Breast epithelium (tissue), 4 donors: ENCODE measurements at regions of chr3 and their contacts with region 1.

Region 1: DNA sequence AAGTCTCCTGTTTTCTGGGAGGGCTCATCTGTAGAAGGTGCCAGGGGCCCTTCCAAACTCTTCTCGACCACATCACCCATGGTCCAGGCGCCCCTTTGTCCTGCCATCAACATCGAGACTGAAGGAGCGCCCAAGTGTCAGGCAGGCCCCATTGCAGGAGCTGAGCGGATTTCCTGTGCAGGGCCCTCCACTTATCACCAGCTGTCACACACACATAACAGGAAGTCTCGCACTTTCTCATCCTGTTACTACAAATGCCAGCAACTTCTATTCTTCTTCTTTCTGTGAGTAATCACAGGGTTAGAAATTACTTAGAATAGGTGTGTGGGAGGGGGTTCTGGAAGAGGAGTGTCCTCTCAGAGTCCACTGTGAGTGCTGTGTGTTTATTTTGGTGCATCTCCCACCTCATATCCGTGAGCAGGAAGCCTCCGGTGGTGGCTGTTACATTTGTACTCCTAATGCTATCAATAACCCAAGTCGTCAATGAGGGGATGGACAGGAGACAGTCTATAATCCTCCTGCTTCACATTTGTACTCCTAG is at the start of gene KLHL6:
- DNase-seq: no peak
- H3K4me3 ChIP-seq: peak within 1 kb of the TSS; percentile 15 to 35 (median 20)
- H3K27ac ChIP-seq: peak within 1 kb of the TSS in 1 of 2 donors; percentile 58
- H3K4me1 ChIP-seq: no peaks in the 10 kb centered on the region
- H3K27me3 ChIP-seq: no peaks in the 10 kb centered on the region
- CTCF ChIP-seq: no peak
- POLR2A ChIP-seq: no peak
- total RNA-seq, gene KLHL6: 2.7 to 7.9 (median 4.3) TPM

Region 2: DNA sequence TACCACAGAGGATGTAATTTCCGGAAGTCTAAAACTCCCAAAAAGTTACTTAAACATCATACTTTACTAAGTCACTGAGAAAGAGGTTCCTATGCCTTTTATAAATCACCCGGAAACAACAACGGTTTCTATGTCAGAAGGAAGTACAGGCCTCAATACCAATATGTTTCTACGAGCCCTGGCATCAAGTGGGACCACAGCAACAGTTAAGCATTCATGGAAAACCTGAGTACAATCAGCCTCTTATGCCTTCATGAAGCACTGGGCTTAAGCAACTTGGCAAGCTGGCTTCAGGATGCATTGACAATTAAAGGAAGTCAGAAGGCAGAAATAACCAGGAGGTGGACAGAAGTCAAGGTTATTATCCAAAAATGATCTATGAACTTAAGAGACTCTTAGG is 321.6 kb before region 1 on chr3:
- intact Hi-C with region 1: no loop called
- DNase-seq: peak in 1 of 2 donors; percentile 41
- H3K4me3 ChIP-seq: no peak overlapping the region
- H3K27ac ChIP-seq: peak overlapping the region in 1 of 2 donors; percentile 54
- H3K4me1 ChIP-seq: no peaks in the 10 kb centered on the region
- H3K27me3 ChIP-seq: no peaks in the 10 kb centered on the region
- CTCF ChIP-seq: no peak
- POLR2A ChIP-seq: no peak

Region 3: DNA sequence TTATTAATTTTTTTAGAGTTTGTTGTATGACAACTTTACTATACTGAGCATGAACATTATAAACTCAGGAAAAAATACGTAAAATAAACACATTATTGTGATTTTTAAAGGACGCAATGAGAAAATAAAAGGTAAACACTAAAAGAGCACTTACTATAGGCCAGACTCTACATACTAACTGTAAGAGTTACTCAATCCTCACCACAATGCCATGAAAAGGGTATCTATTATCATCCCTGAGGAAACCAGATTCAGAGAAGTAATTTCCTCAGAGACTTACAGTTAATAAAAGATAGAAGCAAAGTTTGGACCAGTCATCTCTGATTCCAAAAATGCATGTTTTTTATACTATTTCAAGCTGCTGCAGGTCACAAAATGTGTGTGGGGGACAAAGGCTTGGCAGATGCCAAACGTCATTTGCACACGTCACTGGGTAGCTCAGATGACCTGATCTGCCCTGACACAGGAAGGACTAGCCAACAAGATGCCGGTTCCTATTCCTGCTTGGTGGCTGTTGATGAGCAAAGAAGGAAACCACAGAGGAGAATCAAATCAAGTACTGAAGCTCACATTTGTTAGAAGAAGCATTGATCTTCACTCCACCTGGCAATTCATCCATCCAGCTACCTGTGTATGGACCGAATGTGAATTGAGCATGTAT is 42.4 kb before region 1 on chr3:
- intact Hi-C with region 1: loop called (anchors 5 kb)
- DNase-seq: no peak
- H3K4me3 ChIP-seq: no peak overlapping the region
- H3K27ac ChIP-seq: no peak overlapping the region
- H3K4me1 ChIP-seq: no peaks in the 10 kb centered on the region
- H3K27me3 ChIP-seq: no peaks in the 10 kb centered on the region
- CTCF ChIP-seq: no peak
- POLR2A ChIP-seq: no peak

Region 4: DNA sequence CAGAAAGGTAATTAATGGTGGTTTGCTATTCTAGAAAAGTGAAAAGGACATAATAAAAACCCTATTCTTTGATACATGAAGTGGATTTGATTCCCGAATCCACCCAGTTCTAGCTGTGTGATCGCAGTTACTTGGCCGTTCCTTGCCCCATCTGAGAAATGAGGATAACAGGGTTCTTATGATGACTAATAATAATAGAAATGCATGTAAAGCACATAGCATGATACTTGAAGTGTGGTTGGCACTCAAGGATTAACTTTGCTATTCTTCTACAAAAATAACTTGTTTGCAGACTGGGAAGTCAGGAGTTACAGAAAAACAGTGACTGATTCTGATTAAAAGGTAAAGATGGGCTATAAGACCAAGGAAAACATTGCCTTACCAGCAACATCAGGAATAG is 302.3 kb after region 1 on chr3:
- intact Hi-C with region 1: loop called (anchors 10 kb)
- DNase-seq: no peak
- H3K4me3 ChIP-seq: no peak overlapping the region
- H3K27ac ChIP-seq: no peak overlapping the region
- H3K4me1 ChIP-seq: no peaks in the 10 kb centered on the region
- H3K27me3 ChIP-seq: no peaks in the 10 kb centered on the region
- CTCF ChIP-seq: no peak
- POLR2A ChIP-seq: no peak